PC-9 (cell line): ENCODE measurements at regions of chr14 and their contacts with region 1.

Region 1: DNA sequence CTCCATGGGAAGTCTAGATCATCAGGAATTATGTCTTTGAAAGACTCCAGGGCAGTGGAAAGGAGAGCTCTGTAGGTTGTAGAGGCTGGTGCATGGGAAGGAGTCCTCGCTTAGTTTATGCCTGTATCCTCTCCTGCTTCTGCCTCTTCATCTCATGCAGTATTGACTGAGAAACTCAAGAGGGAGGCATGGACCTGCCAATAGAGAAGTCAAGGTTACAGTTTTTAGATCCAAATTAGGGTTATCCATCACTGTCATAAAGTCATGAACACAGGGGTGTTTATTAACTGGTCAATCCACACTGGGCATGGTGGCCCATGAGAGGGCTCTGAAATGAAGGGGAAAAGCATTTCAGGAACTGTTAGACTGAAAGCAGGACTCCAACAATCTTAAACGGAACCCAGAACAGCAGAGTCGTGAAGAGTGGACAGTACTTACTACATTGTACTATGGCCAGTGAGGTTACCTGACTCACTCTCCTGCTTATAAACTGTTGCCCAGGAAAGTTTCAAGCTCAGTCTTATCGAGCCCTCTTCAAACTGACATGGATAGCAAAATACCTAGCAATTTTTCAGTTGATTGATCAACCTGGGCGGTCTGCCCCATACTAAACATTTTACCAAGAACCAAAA is 30.1 kb upstream of the DHRS7 start:
- DNase-seq: no peak
- H3K4me3 ChIP-seq: no peak overlapping the region
- H3K27ac ChIP-seq: no peak overlapping the region
- H3K4me1 ChIP-seq: peaks cover 14% of the 10 kb centered on the region
- H3K27me3 ChIP-seq: no peaks in the 10 kb centered on the region
- CTCF ChIP-seq: no peak

Region 2: DNA sequence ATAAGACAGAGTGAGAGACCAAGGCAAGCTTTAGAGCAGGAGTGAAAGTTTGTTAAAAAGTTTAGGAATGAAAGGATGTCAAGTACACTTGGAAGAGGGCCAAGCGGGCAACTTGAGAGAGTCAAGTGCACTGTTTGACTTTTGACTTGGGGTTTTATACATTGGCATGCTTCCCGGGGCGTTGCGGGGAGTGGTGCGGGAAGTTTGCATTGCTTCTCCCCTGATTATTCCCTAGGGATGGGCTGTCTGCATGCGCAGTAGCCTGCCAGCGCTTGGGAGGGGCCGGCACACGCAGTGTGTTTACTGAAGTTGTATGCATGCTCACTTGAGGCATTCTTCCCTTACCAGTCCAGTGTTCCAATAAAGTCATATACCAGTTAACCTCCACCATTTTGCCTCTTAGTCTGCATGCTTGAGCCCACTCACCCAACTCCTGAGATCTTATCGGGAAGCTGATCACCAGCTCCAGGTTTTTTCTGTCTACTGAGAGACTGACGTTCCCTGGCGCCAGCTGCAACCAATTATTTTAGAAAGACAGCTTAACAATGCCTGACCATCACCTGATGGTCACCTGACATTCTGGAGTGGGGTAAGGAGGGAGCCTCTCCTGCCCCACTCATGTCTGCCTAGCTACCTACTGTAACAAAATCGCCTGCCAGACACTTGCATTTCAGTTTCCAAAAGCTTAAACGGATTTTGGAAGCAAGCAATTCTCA is 1504.3 kb before region 1 on chr14:
- CTCF ChIA-PET with region 1: no interaction called
- POLR2A ChIA-PET with region 1: no interaction called
- intact Hi-C with region 1: no loop called
- DNase-seq: no peak
- H3K4me3 ChIP-seq: no peak overlapping the region
- H3K27ac ChIP-seq: no peak overlapping the region
- H3K4me1 ChIP-seq: no peaks in the 10 kb centered on the region
- H3K27me3 ChIP-seq: peaks cover 47% of the 10 kb centered on the region
- CTCF ChIP-seq: no peak

Region 3: GRCh38 chr14:59771577-59771976 is 423.7 kb before region 1 on chr14:
- CTCF ChIA-PET with region 1: no interaction called
- POLR2A ChIA-PET with region 1: no interaction called
- intact Hi-C with region 1: no loop called
- DNase-seq: no peak
- H3K4me3 ChIP-seq: no peak overlapping the region
- H3K27ac ChIP-seq: no peak overlapping the region
- H3K4me1 ChIP-seq: no peaks in the 10 kb centered on the region
- H3K27me3 ChIP-seq: no peaks in the 10 kb centered on the region
- CTCF ChIP-seq: no peak

Region 4: DNA sequence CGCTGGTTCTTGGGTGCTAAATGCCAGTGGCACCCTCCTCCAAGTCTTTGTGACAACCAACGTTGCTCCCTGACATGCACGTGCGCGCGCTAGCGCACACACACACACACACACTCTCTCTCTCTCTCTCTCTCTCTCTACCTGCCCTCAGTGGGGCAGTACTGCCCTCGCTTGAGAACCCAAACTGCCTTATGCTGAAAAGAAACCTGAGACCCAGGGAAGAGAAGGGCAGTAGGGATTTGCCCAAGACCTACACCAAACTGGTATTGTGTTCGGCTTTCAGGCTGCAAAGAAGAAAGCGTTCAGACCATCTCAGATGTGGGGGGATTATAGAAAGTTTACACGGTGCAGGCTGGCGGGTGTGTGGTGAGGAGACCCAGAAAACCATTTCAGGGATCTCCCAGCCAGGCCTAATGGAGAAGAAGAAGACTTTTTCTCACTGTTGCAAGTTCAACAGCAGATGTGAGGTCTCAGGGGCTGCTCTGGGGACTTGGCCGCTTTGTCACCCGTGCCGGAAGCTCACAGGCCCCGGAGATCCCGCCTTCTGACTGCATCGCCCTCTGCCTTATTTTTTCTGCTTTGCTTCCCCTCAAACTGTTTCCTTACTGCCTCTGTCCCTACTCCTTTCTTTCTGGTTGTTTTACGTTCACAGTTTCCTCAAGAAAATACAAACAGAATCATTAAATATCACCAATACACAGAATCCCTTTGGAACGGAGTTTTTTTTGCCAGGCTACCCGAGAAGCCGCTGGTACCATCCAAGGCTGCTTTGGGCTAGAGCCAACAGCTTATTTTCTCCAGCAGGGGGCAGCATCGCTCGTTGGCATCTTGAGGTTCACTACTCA is 136.1 kb after region 1 on chr14:
- CTCF ChIA-PET with region 1: no interaction called
- POLR2A ChIA-PET with region 1: no interaction called
- intact Hi-C with region 1: loop called (anchors 5 kb)
- DNase-seq: peak in 1 of 2 experiments; percentile 66
- H3K4me3 ChIP-seq: peak overlapping the region; percentile 66
- H3K27ac ChIP-seq: no peak overlapping the region
- H3K4me1 ChIP-seq: no peaks in the 10 kb centered on the region
- H3K27me3 ChIP-seq: no peaks in the 10 kb centered on the region
- CTCF ChIP-seq: peak; percentile 98